Activated CD8-positive, alpha-beta memory T cell treated with anti-CD3 and anti-CD28 coated beads, Interleukin-2, amount 10 ng/mL, durations not matched to agents 7 days and 5 days (primary cell): ENCODE measurements at regions of chr16 and their contacts with region 1.

Region 1: DNA sequence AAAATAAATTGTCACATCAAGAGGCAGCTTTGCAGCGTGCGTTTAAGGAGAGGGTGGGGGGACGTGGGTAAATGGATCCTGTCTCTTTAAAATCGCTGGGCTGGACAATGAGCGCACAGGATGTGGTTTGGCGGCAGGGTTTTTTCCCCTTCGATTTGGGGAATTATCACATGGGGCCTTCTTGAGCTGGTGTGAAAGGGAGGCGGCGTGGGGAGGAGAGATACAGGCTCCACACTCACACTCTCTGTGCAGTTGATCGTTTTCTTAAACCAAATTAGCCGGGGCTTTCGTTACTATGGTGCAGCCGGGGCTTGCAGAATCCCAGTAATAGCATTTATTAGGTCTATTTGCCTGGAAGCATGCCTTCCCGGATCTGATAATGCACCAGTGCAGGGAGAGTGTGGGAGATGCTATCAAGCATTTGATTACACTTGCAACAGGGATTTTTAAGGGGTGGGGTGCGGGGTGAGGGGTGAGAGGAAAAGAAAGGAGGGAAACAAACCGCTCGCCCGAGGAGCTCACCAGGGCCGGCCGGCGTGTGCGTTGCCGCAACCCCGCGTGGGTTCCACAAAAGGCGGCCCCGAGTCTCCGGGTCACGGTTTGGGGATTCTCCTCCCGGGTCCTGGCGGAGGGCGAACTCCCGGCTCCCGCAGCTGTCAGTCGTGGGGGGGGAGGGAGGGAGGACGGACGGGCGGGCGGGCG is 58.9 kb upstream of the GSE1 start:
- DNase-seq: peak; percentile 94
- ATAC-seq: peak; percentile 56
- H3K4me3 Mint-ChIP-seq: peak overlapping the region; percentile 88
- H3K27ac Mint-ChIP-seq: peak overlapping the region; percentile 96
- H3K4me1 Mint-ChIP-seq: peaks cover 45% of the 10 kb centered on the region
- H3K27me3 Mint-ChIP-seq: no peaks in the 10 kb centered on the region

Region 2: GRCh38 chr16:85420501-85421337 is 133.5 kb before region 1 on chr16:
- CTCF ChIA-PET with region 1: interaction called, 15 read pairs
- DNase-seq: peak; percentile 76
- ATAC-seq: peak; percentile 72
- H3K4me3 Mint-ChIP-seq: no peak overlapping the region
- H3K27ac Mint-ChIP-seq: no peak overlapping the region
- H3K4me1 Mint-ChIP-seq: peaks cover 6% of the 10 kb centered on the region
- H3K27me3 Mint-ChIP-seq: no peaks in the 10 kb centered on the region

Region 3: DNA sequence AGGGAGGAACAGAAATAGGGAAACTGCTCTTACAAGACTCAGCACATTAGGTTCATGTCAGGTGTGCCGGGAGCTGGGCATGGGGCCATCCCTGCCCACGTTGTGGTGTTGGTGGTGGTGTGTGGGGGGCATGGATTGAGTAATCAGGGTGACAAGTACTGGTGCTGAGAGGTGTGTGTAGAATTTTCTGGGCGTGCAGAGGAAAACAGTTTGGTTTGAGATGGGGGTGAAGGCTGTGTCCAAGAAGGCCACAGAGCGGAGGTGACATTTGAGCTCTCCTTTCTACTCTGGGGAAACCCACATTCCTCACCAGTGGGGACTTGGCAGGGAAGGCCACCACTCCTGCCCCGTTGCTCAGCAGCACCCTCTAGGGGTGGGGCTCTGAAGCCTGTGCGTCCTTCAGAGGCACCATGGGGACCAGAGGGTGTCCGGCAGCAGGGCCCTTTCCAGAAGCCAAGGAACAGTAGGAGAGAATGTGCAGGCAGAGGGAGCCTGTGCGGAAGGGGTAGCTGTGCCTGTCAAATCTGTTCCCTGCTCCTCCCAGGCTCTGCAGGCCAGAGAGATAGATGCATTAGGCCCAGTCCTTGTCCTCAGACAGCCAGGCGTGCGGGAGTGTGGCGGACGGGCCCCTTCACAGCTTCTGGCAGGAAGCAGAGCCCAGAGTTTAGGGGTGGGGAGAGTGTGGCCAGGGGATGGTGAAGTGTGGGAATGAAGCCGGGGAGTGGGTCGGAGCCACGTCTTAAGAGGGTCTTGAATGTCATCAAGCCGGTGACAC is 10.2 kb after region 1 on chr16:
- CTCF ChIA-PET with region 1: interaction called, 35 read pairs
- DNase-seq: peak; percentile 58
- ATAC-seq: peak; percentile 45
- H3K4me3 Mint-ChIP-seq: no peak overlapping the region
- H3K27ac Mint-ChIP-seq: no peak overlapping the region
- H3K4me1 Mint-ChIP-seq: peaks cover 40% of the 10 kb centered on the region
- H3K27me3 Mint-ChIP-seq: no peaks in the 10 kb centered on the region

Region 4: DNA sequence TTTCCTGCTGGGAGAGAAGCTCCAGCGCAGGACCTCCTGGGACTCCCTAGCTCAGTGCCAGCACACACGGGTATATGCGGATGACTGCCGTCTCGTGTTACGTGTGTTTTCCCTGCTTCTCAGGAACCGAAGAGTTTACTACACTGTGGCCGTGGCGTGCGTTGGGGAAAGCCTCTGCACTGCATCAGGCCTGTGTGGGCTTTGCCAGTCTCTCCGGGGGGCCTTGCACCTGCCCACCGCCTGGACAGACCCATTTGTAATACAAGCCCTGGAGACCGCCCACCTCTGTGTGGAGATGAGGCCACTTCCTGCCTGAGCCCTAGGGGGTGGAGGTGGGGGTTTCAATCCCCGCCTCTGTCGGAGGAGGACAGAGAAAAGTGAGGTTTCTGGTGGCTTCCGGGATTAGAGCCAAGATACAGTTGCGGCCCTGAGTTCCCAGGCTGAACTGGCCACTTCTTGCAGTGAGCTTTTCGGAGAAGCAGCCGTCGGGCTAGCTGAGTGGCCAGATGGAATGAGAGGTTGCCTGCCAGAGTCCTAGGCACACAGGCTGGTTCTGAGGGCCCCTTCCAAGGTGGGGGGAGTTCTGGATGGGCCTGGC is 15.5 kb after region 1 on chr16:
- CTCF ChIA-PET with region 1: interaction called, 35 read pairs
- DNase-seq: peak; percentile 87
- ATAC-seq: peak; percentile 76
- H3K4me3 Mint-ChIP-seq: peak overlapping the region; percentile 68
- H3K27ac Mint-ChIP-seq: peak overlapping the region; percentile 91
- H3K4me1 Mint-ChIP-seq: peaks cover 56% of the 10 kb centered on the region
- H3K27me3 Mint-ChIP-seq: no peaks in the 10 kb centered on the region

Region 5: GRCh38 chr16:85586380-85587104 is 32.3 kb after region 1 on chr16:
- CTCF ChIA-PET with region 1: no interaction called
- DNase-seq: no peak
- ATAC-seq: no peak
- H3K4me3 Mint-ChIP-seq: no peak overlapping the region
- H3K27ac Mint-ChIP-seq: no peak overlapping the region
- H3K4me1 Mint-ChIP-seq: no peaks in the 10 kb centered on the region
- H3K27me3 Mint-ChIP-seq: no peaks in the 10 kb centered on the region

Region 6: GRCh38 chr16:85675251-85675927 is 121.1 kb after region 1 on chr16:
- CTCF ChIA-PET with region 1: no interaction called
- DNase-seq: no peak
- ATAC-seq: peak; percentile 24
- H3K4me3 Mint-ChIP-seq: no peak overlapping the region
- H3K27ac Mint-ChIP-seq: peak overlapping the region; percentile 53
- H3K4me1 Mint-ChIP-seq: peaks cover 18% of the 10 kb centered on the region
- H3K27me3 Mint-ChIP-seq: no peaks in the 10 kb centered on the region

Region 7: GRCh38 chr16:85686912-85687591 is 132.8 kb after region 1 on chr16:
- CTCF ChIA-PET with region 1: no interaction called
- DNase-seq: peak; percentile 78
- ATAC-seq: peak; percentile 23
- H3K4me3 Mint-ChIP-seq: peak overlapping the region; percentile 79
- H3K27ac Mint-ChIP-seq: peak overlapping the region; percentile 71
- H3K4me1 Mint-ChIP-seq: peaks cover 22% of the 10 kb centered on the region
- H3K27me3 Mint-ChIP-seq: peaks cover 3% of the 10 kb centered on the region